GM12878 (cell line): ENCODE measurements at regions of chrX and their contacts with region 1.

Region 1: GRCh38 chrX:107672955-107673378 is 44.7 kb downstream of the PRPS1 start:
- DNase-seq: no peak
- ATAC-seq: peak; percentile 61
- H3K4me3 ChIP-seq: no peak overlapping the region
- H3K27ac ChIP-seq: peak overlapping the region; percentile 57
- H3K4me1 ChIP-seq: peaks cover 16% of the 10 kb centered on the region
- H3K27me3 ChIP-seq: no peaks in the 10 kb centered on the region
- CTCF ChIP-seq: peak; percentile 72 to 80 (median 73)
- EP300 ChIP-seq: no peak
- POLR2A ChIP-seq: no peak
- RAD21 ChIP-seq: peak; percentile 74

Region 2: DNA sequence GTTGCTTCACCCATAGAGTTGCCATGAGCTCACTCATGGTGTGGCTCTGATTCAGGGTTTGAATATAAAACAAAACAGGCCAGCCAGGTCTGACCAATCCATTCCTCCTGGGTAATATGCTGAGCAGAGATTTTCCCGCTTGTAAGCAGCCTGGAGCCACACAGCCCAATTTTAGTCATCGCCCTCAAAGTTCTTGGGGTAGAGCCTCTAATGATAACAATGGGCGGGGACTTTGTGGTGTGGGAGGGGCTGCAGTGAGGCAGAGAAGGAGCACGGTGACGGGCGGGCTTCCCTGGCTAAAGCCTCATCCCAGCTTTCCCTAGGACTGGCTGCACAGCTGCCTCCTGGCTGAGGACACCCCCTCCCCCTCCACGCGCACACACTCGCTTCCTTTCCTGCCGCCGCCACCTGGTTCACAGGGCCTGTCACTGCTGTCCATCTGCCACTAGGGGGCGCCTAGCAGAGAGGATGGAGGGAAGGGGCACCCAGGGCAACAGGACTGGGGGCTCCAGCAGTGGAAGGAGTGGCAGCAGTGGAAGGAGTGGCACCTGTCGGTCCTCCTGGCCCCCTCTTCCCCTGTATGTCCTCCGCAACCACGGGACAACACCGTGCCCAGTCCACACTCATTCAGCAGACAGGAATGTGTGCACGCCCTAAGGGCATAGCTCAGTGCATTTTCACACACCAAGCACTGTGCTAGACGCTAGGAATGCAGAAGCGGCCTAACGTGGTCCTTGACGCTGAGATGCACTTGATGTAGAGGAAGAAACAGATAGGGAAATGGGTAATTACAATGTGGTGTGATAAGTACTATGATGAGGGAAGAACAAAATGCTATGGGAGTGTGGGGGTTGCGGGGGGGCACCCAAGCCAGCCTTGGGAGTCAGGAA is 17.9 kb before region 1 on chrX:
- CTCF ChIA-PET with region 1: interaction called, 32 read pairs
- POLR2A ChIA-PET with region 1: no interaction called
- RAD21 ChIA-PET with region 1: interaction called, 9 read pairs
- SMC1A ChIA-PET with region 1: interaction called, 10 read pairs
- in situ Hi-C with region 1: no loop called
- intact Hi-C with region 1: no loop called
- DNase-seq: no peak
- ATAC-seq: peak; percentile 96
- H3K4me3 ChIP-seq: no peak overlapping the region
- H3K27ac ChIP-seq: no peak overlapping the region
- H3K4me1 ChIP-seq: no peaks in the 10 kb centered on the region
- H3K27me3 ChIP-seq: no peaks in the 10 kb centered on the region
- CTCF ChIP-seq: peak; percentile 61 to 90 (median 80)
- EP300 ChIP-seq: no peak
- POLR2A ChIP-seq: peak; percentile 49; the same call in 1 of the 2 replicates
- RAD21 ChIP-seq: peak; percentile 40

Region 3: GRCh38 chrX:107701493-107702121 is 28.6 kb after region 1 on chrX:
- CTCF ChIA-PET with region 1: interaction called, 11 read pairs
- POLR2A ChIA-PET with region 1: interaction called, 287 read pairs
- RAD21 ChIA-PET with region 1: interaction called, 17 read pairs
- SMC1A ChIA-PET with region 1: interaction called, 425 read pairs
- in situ Hi-C with region 1: no loop called
- intact Hi-C with region 1: no loop called
- DNase-seq: no peak
- ATAC-seq: peak; percentile 87
- H3K4me3 ChIP-seq: no peak overlapping the region
- H3K27ac ChIP-seq: peak overlapping the region; percentile 46
- H3K4me1 ChIP-seq: peaks cover 24% of the 10 kb centered on the region; the same call in 1 of the 2 replicates
- H3K27me3 ChIP-seq: no peaks in the 10 kb centered on the region
- CTCF ChIP-seq: no peak
- EP300 ChIP-seq: no peak
- POLR2A ChIP-seq: no peak
- RAD21 ChIP-seq: no peak

Region 4: GRCh38 chrX:107731831-107732502 is 59.0 kb after region 1 on chrX:
- CTCF ChIA-PET with region 1: interaction called, 14 read pairs
- POLR2A ChIA-PET with region 1: interaction called, 11 read pairs
- RAD21 ChIA-PET with region 1: interaction called, 43 read pairs
- SMC1A ChIA-PET with region 1: interaction called, 20 read pairs
- in situ Hi-C with region 1: no loop called
- intact Hi-C with region 1: no loop called
- DNase-seq: no peak
- ATAC-seq: no peak
- H3K4me3 ChIP-seq: no peak overlapping the region
- H3K27ac ChIP-seq: no peak overlapping the region
- H3K4me1 ChIP-seq: no peaks in the 10 kb centered on the region
- H3K27me3 ChIP-seq: no peaks in the 10 kb centered on the region
- CTCF ChIP-seq: no peak
- EP300 ChIP-seq: no peak
- POLR2A ChIP-seq: no peak
- RAD21 ChIP-seq: no peak

Region 5: GRCh38 chrX:107766470-107767150 is 93.6 kb after region 1 on chrX:
- CTCF ChIA-PET with region 1: interaction called, 10 read pairs
- POLR2A ChIA-PET with region 1: interaction called, 4 read pairs
- RAD21 ChIA-PET with region 1: interaction called, 12 read pairs
- SMC1A ChIA-PET with region 1: interaction called, 10 read pairs
- in situ Hi-C with region 1: no loop called
- intact Hi-C with region 1: no loop called
- DNase-seq: no peak
- ATAC-seq: peak; percentile 73
- H3K4me3 ChIP-seq: no peak overlapping the region
- H3K27ac ChIP-seq: no peak overlapping the region
- H3K4me1 ChIP-seq: no peaks in the 10 kb centered on the region
- H3K27me3 ChIP-seq: no peaks in the 10 kb centered on the region
- CTCF ChIP-seq: no peak
- EP300 ChIP-seq: no peak
- POLR2A ChIP-seq: no peak
- RAD21 ChIP-seq: no peak